B cell (primary cell): ENCODE measurements at regions of chr1 and their contacts with region 1.

Region 1: GRCh38 chr1:151292207-151293030 is 10.3 kb downstream of the ZNF687 start:
- DNase-seq: peak; percentile 49
- ATAC-seq: peak; percentile 41
- H3K4me3 ChIP-seq: no peak overlapping the region
- H3K4me3 Mint-ChIP-seq: no peak overlapping the region
- H3K27ac ChIP-seq: peak overlapping the region; percentile 24 to 66
- H3K27ac Mint-ChIP-seq: peak overlapping the region; percentile 74
- H3K4me1 ChIP-seq: peaks cover 0 to 4% of the 10 kb centered on the region in 2 donors
- H3K4me1 Mint-ChIP-seq: peaks cover 16% of the 10 kb centered on the region
- H3K27me3 ChIP-seq: no peaks in the 10 kb centered on the region
- H3K27me3 Mint-ChIP-seq: no peaks in the 10 kb centered on the region
- CTCF ChIP-seq: peak; percentile 23

Region 2: GRCh38 chr1:151436985-151437384 is 144.6 kb after region 1 on chr1:
- CTCF ChIA-PET with region 1: no interaction called
- POLR2A ChIA-PET with region 1: interaction called, 12 read pairs
- intact Hi-C with region 1: no loop called
- DNase-seq: no peak
- ATAC-seq: no peak
- H3K4me3 ChIP-seq: no peak overlapping the region
- H3K4me3 Mint-ChIP-seq: no peak overlapping the region
- H3K27ac ChIP-seq: no peak overlapping the region
- H3K27ac Mint-ChIP-seq: no peak overlapping the region
- H3K4me1 ChIP-seq: peaks cover 5 to 7% of the 10 kb centered on the region in 2 donors
- H3K4me1 Mint-ChIP-seq: peaks cover 38% of the 10 kb centered on the region
- H3K27me3 ChIP-seq: no peaks in the 10 kb centered on the region
- H3K27me3 Mint-ChIP-seq: no peaks in the 10 kb centered on the region
- CTCF ChIP-seq: no peak